ENCODE measurements at regions of chr11 and their contacts with region 1.

Region 1: GRCh38 chr11:26551186-26551801 is 20.8 kb downstream of the MUC15 start:
- DNase-seq: no peak
- ATAC-seq: no peak
- H3K4me3 ChIP-seq: no peak overlapping the region
- H3K27ac ChIP-seq: no peak overlapping the region
- H3K4me1 ChIP-seq: no peaks in the 10 kb centered on the region
- H3K27me3 ChIP-seq: no peaks in the 10 kb centered on the region
- CTCF ChIP-seq: 0 out of 6 replicates have a peak, but pooled peaks of 1 of the 3 experiments have one; percentile 1
- EP300 ChIP-seq: no peak
- POLR2A ChIP-seq: no peak
- RAD21 ChIP-seq: no peak

Region 2: GRCh38 chr11:26286472-26287066 is 264.7 kb before region 1 on chr11:
- CTCF ChIA-PET with region 1: no interaction called
- POLR2A ChIA-PET with region 1: no interaction called
- in situ Hi-C with region 1: no loop called
- intact Hi-C with region 1: loop called (anchors 5 kb)
- DNase-seq: peak in 1 of 4 experiments; percentile 5
- ATAC-seq: 0 out of 3 replicates have a peak, but pooled peaks have one; percentile 48
- H3K4me3 ChIP-seq: no peak overlapping the region
- H3K27ac ChIP-seq: no peak overlapping the region
- H3K4me1 ChIP-seq: no peaks in the 10 kb centered on the region
- H3K27me3 ChIP-seq: no peaks in the 10 kb centered on the region
- CTCF ChIP-seq: peak; percentile 11 to 39 (median 17); a peak in 2 of 6 replicates
- EP300 ChIP-seq: no peak
- POLR2A ChIP-seq: no peak
- RAD21 ChIP-seq: 0 out of 4 replicates have a peak, but pooled peaks of 1 of the 2 experiments have one; percentile 5

Region 3: GRCh38 chr11:26457636-26458035 is 93.7 kb before region 1 on chr11:
- CTCF ChIA-PET with region 1: no interaction called
- POLR2A ChIA-PET with region 1: no interaction called
- in situ Hi-C with region 1: no loop called
- intact Hi-C with region 1: no loop called
- DNase-seq: no peak
- ATAC-seq: no peak
- H3K4me3 ChIP-seq: no peak overlapping the region
- H3K27ac ChIP-seq: no peak overlapping the region
- H3K4me1 ChIP-seq: no peaks in the 10 kb centered on the region
- H3K27me3 ChIP-seq: no peaks in the 10 kb centered on the region
- CTCF ChIP-seq: no peak
- EP300 ChIP-seq: no peak
- POLR2A ChIP-seq: no peak
- RAD21 ChIP-seq: no peak

Region 4: GRCh38 chr11:26953770-26954392 is 402.6 kb after region 1 on chr11:
- CTCF ChIA-PET with region 1: no interaction called
- POLR2A ChIA-PET with region 1: no interaction called
- in situ Hi-C with region 1: no loop called
- intact Hi-C with region 1: no loop called
- DNase-seq: no peak
- ATAC-seq: no peak
- H3K4me3 ChIP-seq: no peak overlapping the region
- H3K27ac ChIP-seq: no peak overlapping the region
- H3K4me1 ChIP-seq: no peaks in the 10 kb centered on the region
- H3K27me3 ChIP-seq: no peaks in the 10 kb centered on the region
- CTCF ChIP-seq: no peak
- EP300 ChIP-seq: no peak
- POLR2A ChIP-seq: no peak
- RAD21 ChIP-seq: no peak

Measured in K562 (cell line).